ENCODE measurements at regions of chr4 and their contacts with region 1.

Region 1: GRCh38 chr4:83484500-83485461 is at the start of gene ABRAXAS1:
- DNase-seq: peak; percentile 90 to 99 (median 95)
- ATAC-seq: peak; percentile 91
- H3K4me3 Mint-ChIP-seq: peak within 1 kb of the TSS; percentile 92 to 99 (median 98)
- H3K27ac Mint-ChIP-seq: peak within 1 kb of the TSS; percentile 97 to 99 (median 98)
- H3K4me1 Mint-ChIP-seq: peaks cover 13 to 44% (median 33%) of the 10 kb centered on the region in 4 donors
- H3K27me3 Mint-ChIP-seq: no peaks in the 10 kb centered on the region
- polyA plus RNA-seq, gene ABRAXAS1: 13.8 to 15.3 (median 14.0) TPM

Region 2: DNA sequence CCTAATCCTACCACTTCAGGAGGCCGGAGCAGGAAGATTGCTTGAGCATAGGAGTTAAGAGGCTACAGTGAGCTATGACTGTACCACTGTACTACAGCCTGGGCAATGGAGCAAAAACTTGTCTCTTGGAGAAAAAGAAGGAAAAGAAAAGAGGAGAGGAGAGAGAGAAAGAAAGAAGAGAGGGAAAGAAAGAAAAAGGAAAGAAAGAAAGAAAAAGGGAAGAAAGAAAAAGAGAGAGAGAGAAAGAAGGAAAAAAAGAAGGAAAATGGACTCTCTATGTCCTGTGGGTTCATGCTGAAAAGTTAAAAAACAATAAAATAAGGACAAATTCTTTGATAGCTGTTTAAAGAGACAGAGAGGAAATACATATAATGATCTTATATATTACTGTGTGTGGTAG is 13.4 kb after region 1 on chr4:
- POLR2A ChIA-PET with region 1: interaction called, 16 read pairs
- DNase-seq: no peak
- ATAC-seq: no peak
- H3K4me3 Mint-ChIP-seq: no peak overlapping the region
- H3K27ac Mint-ChIP-seq: peak overlapping the region in 2 of 10 donors; percentile 2 to 23
- H3K4me1 Mint-ChIP-seq: peaks cover 0 to 2% (median 0%) of the 10 kb centered on the region in 4 donors
- H3K27me3 Mint-ChIP-seq: peaks cover 0 to 4% (median 0%) of the 10 kb centered on the region in 5 donors

Measured in naive thymus-derived CD8-positive, alpha-beta T cell (primary cell).